PC-3 (cell line): ENCODE measurements at regions of chr6 and their contacts with region 1.

Region 1: GRCh38 chr6:48765352-48765961 is 654.5 kb upstream of the PTCHD4 start:
- DNase-seq: peak; percentile 87
- ATAC-seq: peak; percentile 82
- H3K4me3 ChIP-seq: no peak overlapping the region
- H3K27ac ChIP-seq: peak overlapping the region; percentile 79
- H3K4me1 ChIP-seq: peaks cover 34% of the 10 kb centered on the region
- H3K27me3 ChIP-seq: no peaks in the 10 kb centered on the region
- CTCF ChIP-seq: peak; percentile 87

Region 2: DNA sequence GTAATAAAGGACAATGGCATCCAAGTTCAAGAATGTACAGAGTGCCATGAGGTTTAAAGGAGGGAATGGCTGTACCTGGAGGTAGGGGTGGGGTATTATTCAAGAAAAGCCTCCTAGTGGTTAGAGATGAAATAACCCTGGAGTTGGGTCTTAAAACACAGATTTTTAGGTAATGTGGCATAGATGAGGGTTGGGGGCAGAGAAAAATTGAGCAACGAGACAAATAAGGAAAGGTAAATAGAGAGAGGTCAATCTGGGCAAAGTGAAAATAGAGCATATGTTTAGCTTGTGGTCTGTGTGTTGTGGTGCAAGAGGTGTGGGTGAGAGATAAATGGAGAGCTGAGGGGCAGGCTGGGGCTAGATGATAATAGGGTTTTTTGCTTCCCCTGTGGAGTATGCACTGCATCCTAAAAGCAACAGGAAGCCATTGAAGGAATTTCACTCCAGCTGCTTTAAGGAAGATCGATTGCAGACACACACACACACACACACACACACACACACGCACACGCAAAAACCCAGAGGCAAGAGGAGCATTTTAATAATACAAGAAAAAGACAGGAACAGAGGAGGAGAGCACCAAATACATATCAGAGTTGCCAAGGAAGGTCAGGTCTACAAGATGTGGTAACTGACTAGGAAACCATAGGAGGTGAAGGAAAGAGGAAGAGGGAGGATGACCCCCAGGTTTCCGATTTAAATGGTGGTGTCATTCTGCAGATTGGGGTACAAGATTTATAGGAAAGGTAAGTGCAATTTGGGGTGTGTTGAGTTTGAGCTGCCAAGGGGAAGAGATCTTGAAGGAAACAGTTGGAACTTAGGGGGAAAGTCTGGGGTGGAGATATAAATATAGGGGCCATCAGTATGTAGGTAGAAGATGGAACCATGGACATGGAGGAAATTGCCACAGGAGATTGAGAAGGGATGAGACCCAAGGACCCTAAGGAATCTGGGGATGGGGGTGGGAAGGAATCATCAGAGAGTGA is 1692.0 kb before region 1 on chr6:
- CTCF ChIA-PET with region 1: no interaction called
- POLR2A ChIA-PET with region 1: no interaction called
- intact Hi-C with region 1: no loop called
- DNase-seq: peak; percentile 41
- ATAC-seq: no peak; the same call in 1 of the 2 replicates
- H3K4me3 ChIP-seq: no peak overlapping the region
- H3K27ac ChIP-seq: no peak overlapping the region
- H3K4me1 ChIP-seq: peaks cover 14% of the 10 kb centered on the region; the same call in 1 of the 2 replicates
- H3K27me3 ChIP-seq: no peaks in the 10 kb centered on the region
- CTCF ChIP-seq: peak; percentile 69

Region 3: DNA sequence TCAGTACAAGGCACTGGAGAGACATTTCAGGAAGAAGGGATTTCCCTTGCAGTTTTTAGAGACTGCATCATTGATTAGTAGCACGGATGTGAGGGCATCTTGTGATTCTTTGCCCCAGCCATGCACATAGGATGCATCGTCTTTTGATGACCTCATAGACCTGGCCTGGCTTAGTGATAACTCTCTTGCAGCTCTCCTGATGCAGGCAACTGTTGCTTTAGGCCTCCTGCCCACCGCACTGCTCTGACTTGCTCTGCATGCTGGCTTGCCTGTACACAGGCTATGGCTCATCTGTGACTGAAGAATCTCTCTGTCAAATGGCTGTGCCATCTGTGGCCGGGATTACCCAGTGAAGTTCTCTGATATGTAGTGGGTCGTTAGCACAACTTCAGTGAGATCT is 446.8 kb before region 1 on chr6:
- CTCF ChIA-PET with region 1: no interaction called
- POLR2A ChIA-PET with region 1: no interaction called
- intact Hi-C with region 1: loop called (anchors 10 kb)
- DNase-seq: no peak
- ATAC-seq: no peak
- H3K4me3 ChIP-seq: no peak overlapping the region
- H3K27ac ChIP-seq: no peak overlapping the region
- H3K4me1 ChIP-seq: no peaks in the 10 kb centered on the region
- H3K27me3 ChIP-seq: no peaks in the 10 kb centered on the region
- CTCF ChIP-seq: no peak

Region 4: DNA sequence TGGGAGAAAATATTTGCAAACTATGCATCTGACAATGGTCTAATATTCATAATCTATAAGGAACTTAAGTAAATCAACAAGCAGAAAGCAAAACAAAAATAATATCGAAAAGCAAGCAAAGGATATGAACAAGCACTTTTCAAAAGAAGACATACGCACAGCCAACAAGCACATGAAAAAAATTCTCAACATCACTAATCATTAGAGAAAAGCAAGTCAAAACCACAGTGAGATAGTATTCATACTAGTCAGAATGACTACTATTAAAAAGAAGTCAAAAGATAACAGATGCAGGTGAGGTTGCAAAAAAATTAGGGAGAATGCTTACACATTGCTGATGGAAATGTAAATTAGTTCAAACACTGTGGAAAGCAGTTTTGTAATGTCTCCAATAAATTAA is 287.4 kb after region 1 on chr6:
- CTCF ChIA-PET with region 1: no interaction called
- POLR2A ChIA-PET with region 1: no interaction called
- intact Hi-C with region 1: loop called (anchors 5 kb)
- DNase-seq: peak; percentile 57
- ATAC-seq: no peak
- H3K4me3 ChIP-seq: no peak overlapping the region
- H3K27ac ChIP-seq: peak overlapping the region; percentile 94
- H3K4me1 ChIP-seq: peaks cover 44% of the 10 kb centered on the region
- H3K27me3 ChIP-seq: no peaks in the 10 kb centered on the region
- CTCF ChIP-seq: no peak

Region 5: DNA sequence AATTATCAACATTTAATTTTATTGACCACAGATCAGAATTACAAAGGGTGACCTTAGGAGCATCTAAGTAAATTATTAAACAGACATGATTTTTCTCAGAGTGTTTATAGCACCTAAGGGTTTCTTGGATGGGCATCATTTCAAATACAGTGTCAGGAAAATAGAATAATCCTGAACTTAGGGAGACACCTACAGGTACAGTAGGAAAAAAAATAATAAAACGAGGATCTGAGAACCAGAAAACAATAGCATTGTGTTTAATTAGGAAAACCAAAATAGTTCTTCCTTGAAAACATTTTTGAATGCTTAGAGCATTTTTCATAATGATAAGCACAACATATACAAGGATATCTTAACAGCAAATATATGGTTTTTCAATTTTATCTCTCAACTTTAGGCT is 658.4 kb after region 1 on chr6:
- CTCF ChIA-PET with region 1: no interaction called
- POLR2A ChIA-PET with region 1: no interaction called
- intact Hi-C with region 1: loop called (anchors 5 kb)
- DNase-seq: peak; percentile 55
- ATAC-seq: peak; percentile 55
- H3K4me3 ChIP-seq: no peak overlapping the region
- H3K27ac ChIP-seq: no peak overlapping the region
- H3K4me1 ChIP-seq: no peaks in the 10 kb centered on the region; the same call in 1 of the 2 replicates
- H3K27me3 ChIP-seq: no peaks in the 10 kb centered on the region
- CTCF ChIP-seq: peak; percentile 73